Left colon (tissue), 2 donors: ENCODE measurements at regions of chr17 and their contacts with region 1.

Region 1: DNA sequence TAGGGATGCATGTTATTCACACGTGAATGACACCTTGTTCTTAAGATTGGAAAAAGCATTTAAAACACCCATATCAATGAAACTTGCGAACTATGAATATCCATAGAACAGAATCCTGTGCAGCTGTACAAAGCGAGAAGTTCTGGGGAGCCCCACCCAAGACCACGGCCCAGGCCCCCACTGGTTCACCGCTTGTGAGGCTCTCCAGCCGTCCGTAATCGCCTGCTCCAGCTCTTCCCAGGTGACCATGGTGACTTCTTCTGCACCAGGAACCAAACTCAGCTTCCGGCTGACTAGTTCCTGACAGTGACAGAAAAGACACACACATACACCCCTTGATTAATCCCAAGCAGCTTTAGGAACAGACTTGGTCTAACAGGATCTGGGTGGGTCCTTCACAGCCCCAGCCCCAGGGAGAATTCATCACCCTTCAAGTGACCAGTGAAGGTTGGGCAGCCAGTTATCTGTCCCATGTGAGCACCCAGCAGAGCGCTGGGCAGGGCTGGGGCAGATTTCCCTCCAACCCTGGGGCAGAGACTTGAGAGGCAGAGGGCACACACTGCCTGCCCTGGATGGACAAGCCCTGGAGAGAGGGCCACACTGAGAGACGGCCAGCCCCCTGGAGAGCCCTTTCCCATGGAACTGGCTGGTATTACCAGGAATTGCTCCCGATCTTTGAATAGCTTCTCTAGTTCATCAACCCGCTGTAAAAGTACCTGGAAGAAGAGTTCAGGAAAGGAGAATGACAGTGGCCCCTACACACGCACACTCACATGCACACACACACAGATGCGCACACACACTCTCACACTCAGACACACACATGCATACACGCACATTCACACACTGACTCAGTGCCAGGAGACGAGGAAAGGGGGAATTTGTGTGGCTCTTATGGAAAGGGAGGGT is 3.6 kb downstream of the QRICH2 start:
- DNase-seq: no peak
- ATAC-seq: no peak

Region 2: GRCh38 chr17:76384222-76384986 is 79.9 kb after region 1 on chr17 and contains the start of gene SPHK1:
- intact Hi-C with region 1: no loop called
- DNase-seq: peak in 1 of 2 donors; percentile 81
- ATAC-seq: peak; percentile 83
- total RNA-seq, gene SPHK1: 2.9 to 4.2 TPM

Region 3: DNA sequence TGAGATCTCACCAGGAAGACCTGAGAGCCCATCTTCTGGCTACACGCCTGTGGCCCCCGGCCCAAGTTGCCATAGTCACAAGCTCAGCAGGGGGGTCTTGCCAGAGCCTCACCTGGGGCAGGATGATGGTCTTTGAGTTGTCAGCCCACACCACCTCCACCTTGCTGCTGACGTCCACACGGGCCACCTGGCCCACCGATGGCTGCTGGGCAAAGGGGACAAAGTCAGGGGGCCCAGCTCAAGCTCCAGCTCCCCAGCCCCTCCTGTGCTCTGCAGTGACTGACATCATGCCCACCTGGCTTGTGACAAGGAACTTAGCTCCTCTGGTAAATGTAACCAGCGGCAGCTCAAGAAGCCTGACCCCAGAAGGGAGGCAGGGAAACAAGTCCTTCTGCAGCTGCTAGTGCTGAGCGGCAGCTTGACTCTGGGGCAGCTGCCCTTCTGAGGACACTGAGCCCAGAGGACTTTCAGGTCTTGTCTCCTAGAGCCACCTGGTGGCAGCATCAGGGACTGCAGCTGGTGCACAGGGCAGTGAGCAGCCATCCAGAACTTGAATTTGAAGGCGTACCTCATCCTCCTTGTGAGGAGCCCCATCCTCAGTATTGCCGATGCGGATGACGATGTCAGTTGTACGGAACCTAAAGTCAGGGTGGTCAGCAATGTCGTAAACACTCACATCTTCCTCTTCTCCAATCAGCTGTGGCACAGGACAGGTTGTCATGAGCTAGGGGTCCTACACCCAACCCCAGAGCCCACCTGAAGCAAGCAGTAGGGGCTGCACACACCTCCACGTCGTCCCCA is 93.4 kb after region 1 on chr17:
- intact Hi-C with region 1: loop called (anchors 2 to 5 kb)
- DNase-seq: peak; percentile 79 to 93
- ATAC-seq: peak; percentile 86

Region 4: DNA sequence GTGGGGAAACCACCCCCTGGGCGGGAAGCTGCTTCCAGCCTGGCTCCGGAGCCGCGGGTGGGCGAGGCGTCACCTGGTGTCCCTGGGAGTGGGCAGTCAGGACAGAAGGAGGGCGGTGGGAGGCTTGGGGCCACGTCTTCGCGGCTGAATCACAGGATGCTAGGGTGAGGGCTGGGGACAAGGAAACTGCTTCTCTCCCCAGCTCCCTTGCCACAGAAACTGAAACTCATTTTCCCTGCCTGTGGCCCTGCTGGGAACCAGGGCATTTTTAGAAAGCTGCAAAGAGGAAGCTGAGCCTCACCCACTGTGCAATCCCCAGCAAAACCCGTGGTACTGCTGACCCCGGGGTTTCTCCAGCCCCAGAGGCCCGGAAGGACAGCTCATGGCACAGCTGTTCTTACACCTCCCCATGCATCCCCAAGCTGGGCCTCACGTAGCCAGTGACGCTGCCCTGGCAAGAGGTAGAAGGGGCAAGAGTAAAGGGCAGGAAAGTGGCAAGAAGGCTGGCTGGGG is 188.6 kb after region 1 on chr17:
- intact Hi-C with region 1: no loop called
- DNase-seq: peak; percentile 63 to 78
- ATAC-seq: peak; percentile 59